ENCODE measurements at regions of chr10 and their contacts with region 1.

Region 1: GRCh38 chr10:62779487-62780248 is 24.9 kb upstream of the ADO start:
- DNase-seq: peak; percentile 40
- ATAC-seq: peak; percentile 99
- H3K4me3 Mint-ChIP-seq: peak overlapping the region; percentile 50
- H3K27ac Mint-ChIP-seq: peak overlapping the region; percentile 76
- H3K4me1 Mint-ChIP-seq: peaks cover 33% of the 10 kb centered on the region
- H3K27me3 Mint-ChIP-seq: no peaks in the 10 kb centered on the region
- CTCF ChIP-seq: no peak

Region 2: GRCh38 chr10:61950449-61951143 is 829.1 kb before region 1 on chr10:
- CTCF ChIA-PET with region 1: no interaction called
- POLR2A ChIA-PET with region 1: no interaction called
- intact Hi-C with region 1: no loop called
- DNase-seq: no peak
- ATAC-seq: no peak
- H3K4me3 Mint-ChIP-seq: no peak overlapping the region
- H3K27ac Mint-ChIP-seq: peak overlapping the region; percentile 46
- H3K4me1 Mint-ChIP-seq: peaks cover 34% of the 10 kb centered on the region
- H3K27me3 Mint-ChIP-seq: no peaks in the 10 kb centered on the region
- CTCF ChIP-seq: no peak

Region 3: GRCh38 chr10:62471711-62472110 is 308.0 kb before region 1 on chr10:
- CTCF ChIA-PET with region 1: no interaction called
- POLR2A ChIA-PET with region 1: no interaction called
- intact Hi-C with region 1: no loop called
- DNase-seq: no peak
- ATAC-seq: no peak
- H3K4me3 Mint-ChIP-seq: no peak overlapping the region
- H3K27ac Mint-ChIP-seq: no peak overlapping the region
- H3K4me1 Mint-ChIP-seq: peaks cover 3% of the 10 kb centered on the region
- H3K27me3 Mint-ChIP-seq: peaks cover 7% of the 10 kb centered on the region
- CTCF ChIP-seq: no peak

Region 4: GRCh38 chr10:62632071-62632809 is 147.4 kb before region 1 on chr10:
- CTCF ChIA-PET with region 1: no interaction called
- POLR2A ChIA-PET with region 1: no interaction called
- intact Hi-C with region 1: loop called (anchors 1 kb)
- DNase-seq: no peak
- ATAC-seq: peak; percentile 81
- H3K4me3 Mint-ChIP-seq: peak overlapping the region; percentile 83
- H3K27ac Mint-ChIP-seq: peak overlapping the region; percentile 98
- H3K4me1 Mint-ChIP-seq: peaks cover 58% of the 10 kb centered on the region
- H3K27me3 Mint-ChIP-seq: no peaks in the 10 kb centered on the region
- CTCF ChIP-seq: no peak

Region 5: GRCh38 chr10:62689712-62690111 is 90.0 kb before region 1 on chr10:
- CTCF ChIA-PET with region 1: no interaction called
- POLR2A ChIA-PET with region 1: interaction called, 5 read pairs
- intact Hi-C with region 1: loop called (anchors 2 kb)
- DNase-seq: no peak
- ATAC-seq: peak; percentile 76
- H3K4me3 Mint-ChIP-seq: peak overlapping the region; percentile 70
- H3K27ac Mint-ChIP-seq: peak overlapping the region; percentile 75
- H3K4me1 Mint-ChIP-seq: peaks cover 43% of the 10 kb centered on the region
- H3K27me3 Mint-ChIP-seq: no peaks in the 10 kb centered on the region
- CTCF ChIP-seq: no peak

Region 6: GRCh38 chr10:62742536-62743061 is 37.1 kb before region 1 on chr10:
- CTCF ChIA-PET with region 1: no interaction called
- POLR2A ChIA-PET with region 1: no interaction called
- intact Hi-C with region 1: loop called (anchors 2 kb)
- DNase-seq: no peak
- ATAC-seq: peak; percentile 85
- H3K4me3 Mint-ChIP-seq: peak overlapping the region; percentile 24
- H3K27ac Mint-ChIP-seq: peak overlapping the region; percentile 25
- H3K4me1 Mint-ChIP-seq: peaks cover 17% of the 10 kb centered on the region
- H3K27me3 Mint-ChIP-seq: no peaks in the 10 kb centered on the region
- CTCF ChIP-seq: no peak

Region 7: GRCh38 chr10:62804356-62805230 is 24.9 kb after region 1 on chr10 and contains the start of gene ADO:
- CTCF ChIA-PET with region 1: interaction called, 5 read pairs
- POLR2A ChIA-PET with region 1: interaction called, 9 read pairs
- intact Hi-C with region 1: loop called (anchors 1 kb)
- DNase-seq: peak; percentile 77
- ATAC-seq: peak; percentile 87
- H3K4me3 Mint-ChIP-seq: peak within 1 kb of the TSS; percentile 95
- H3K27ac Mint-ChIP-seq: peak within 1 kb of the TSS; percentile 99
- H3K4me1 Mint-ChIP-seq: peaks cover 41% of the 10 kb centered on the region
- H3K27me3 Mint-ChIP-seq: no peaks in the 10 kb centered on the region
- CTCF ChIP-seq: no peak
- total RNA-seq, gene ADO: 21.6 and 21.7 TPM in 2 replicates

Measured in activated B cell treated with CpG ODN at 0.5 μM for 24 hours (primary cell).